Activated CD8-positive, alpha-beta T cell treated with anti-CD3 and anti-CD28 coated beads, Interleukin-2, amount 10 ng/mL, durations not matched to agents 7 days and 5 days (primary cell): ENCODE measurements at regions of chr1 and their contacts with region 1.

Region 1: DNA sequence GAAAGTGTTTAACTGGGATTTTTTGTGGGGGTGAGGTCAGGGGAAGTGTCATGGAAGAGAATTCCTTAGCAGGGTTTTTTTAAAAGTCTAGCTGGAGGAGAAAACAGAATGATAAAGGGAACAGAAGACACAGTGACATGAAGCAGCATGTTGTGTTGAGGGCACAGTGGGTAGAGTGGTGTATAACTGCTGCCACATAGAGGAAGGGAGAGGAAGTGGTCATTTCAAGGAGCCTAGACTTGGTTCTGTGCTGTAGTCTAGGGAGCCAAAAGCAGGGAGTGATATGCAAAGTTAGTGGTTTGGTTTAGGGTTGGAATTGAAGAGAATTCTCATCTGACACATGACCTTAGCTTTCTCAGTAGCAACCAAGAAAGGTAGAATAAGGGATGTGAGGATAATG is 10.2 kb downstream of the EEIG2 start:
- DNase-seq: peak; percentile 60
- ATAC-seq: peak; percentile 99
- H3K4me3 Mint-ChIP-seq: no peak overlapping the region
- H3K27ac Mint-ChIP-seq: no peak overlapping the region
- H3K4me1 Mint-ChIP-seq: peaks cover 4% of the 10 kb centered on the region
- H3K27me3 Mint-ChIP-seq: no peaks in the 10 kb centered on the region

Region 2: DNA sequence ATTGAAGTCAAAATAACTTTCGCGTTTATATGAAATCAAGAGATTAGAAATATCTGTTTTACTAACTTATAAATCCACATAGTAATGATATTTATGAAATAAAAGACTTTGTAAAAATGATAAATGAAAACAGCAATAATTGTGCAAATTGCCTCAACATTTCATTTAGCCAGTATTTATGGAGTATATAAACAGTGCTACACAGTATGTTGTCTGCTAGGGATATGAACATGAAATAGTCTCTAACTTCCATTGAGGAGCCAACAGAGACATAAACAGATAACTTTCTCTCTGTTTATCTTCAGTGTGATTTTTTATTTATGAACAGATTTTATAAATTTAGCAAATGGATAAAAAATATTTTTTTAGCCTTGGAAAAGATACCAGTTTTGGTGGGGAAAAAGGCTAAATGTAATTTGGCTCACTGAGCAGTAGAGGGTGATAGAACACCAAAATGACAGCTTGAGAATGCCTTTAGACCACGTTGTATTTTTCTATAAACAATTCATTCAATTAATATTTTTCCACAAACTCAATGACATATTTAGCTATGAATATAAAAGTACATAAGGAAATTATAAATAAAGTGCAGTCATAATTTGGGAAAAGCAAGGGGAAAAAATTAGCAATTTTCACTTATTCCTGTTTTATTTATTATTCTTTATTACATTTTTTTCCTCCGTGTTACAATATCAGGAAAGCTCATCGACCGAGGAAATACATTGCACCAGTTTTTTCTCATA is 57.7 kb before region 1 on chr1:
- CTCF ChIA-PET with region 1: interaction called, 10 read pairs
- POLR2A ChIA-PET with region 1: no interaction called
- DNase-seq: no peak
- ATAC-seq: no peak
- H3K4me3 Mint-ChIP-seq: no peak overlapping the region
- H3K27ac Mint-ChIP-seq: no peak overlapping the region
- H3K4me1 Mint-ChIP-seq: no peaks in the 10 kb centered on the region
- H3K27me3 Mint-ChIP-seq: peaks cover 57% of the 10 kb centered on the region

Region 3: GRCh38 chr1:108661030-108661620 is 91.0 kb after region 1 on chr1 and contains the start of gene HENMT1:
- CTCF ChIA-PET with region 1: no interaction called
- POLR2A ChIA-PET with region 1: no interaction called
- DNase-seq: peak; percentile 84
- ATAC-seq: peak; percentile 86
- H3K4me3 Mint-ChIP-seq: peak within 1 kb of the TSS; percentile 85
- H3K27ac Mint-ChIP-seq: peak within 1 kb of the TSS; percentile 97
- H3K4me1 Mint-ChIP-seq: peaks cover 51% of the 10 kb centered on the region
- H3K27me3 Mint-ChIP-seq: no peaks in the 10 kb centered on the region
- total RNA-seq, gene HENMT1: 38.7 to 40.5 TPM

Region 4: DNA sequence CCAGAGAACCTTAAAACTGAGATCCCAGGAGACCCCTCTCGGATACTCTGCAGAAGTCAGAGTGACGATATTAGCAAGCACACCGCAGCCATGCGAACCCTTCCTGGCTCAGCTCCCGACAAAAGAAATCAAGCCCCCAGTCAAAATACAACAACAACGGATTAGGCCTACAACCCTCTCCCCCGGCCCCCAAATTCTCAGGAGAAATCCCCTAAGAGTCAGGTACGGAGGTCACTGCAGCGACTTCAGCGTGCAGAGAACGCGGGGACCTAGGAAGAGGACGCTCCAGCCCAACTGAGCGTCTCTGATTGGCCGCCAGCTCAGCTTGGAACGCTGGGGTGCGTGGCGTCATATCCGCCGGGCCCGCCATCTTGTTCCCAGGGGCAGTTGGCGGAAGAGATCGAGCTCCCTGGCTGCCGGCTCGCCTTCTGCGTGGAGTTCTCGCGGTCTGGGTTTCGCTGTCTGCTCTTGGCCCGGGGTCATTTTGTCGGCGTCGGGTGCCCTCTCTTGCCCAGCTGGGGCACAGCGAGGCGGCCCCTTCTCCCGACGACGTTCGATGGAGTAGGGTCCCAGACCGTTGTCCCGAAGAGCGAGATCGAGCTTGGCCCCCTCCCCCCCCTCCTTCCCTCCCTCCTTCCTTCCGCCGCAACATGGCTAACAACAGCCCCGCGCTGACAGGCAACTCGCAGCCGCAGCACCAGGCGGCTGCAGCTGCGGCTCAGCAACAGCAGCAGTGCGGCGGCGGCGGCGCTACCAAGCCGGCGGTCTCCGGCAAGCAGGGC is 122.0 kb after region 1 on chr1 and contains the start of gene PRPF38B:
- CTCF ChIA-PET with region 1: no interaction called
- POLR2A ChIA-PET with region 1: no interaction called
- DNase-seq: peak; percentile 97
- ATAC-seq: peak; percentile 89
- H3K4me3 Mint-ChIP-seq: peak within 1 kb of the TSS; percentile 96
- H3K27ac Mint-ChIP-seq: peak within 1 kb of the TSS; percentile 99
- H3K4me1 Mint-ChIP-seq: peaks cover 42% of the 10 kb centered on the region
- H3K27me3 Mint-ChIP-seq: no peaks in the 10 kb centered on the region
- total RNA-seq, gene PRPF38B: 66.8 to 69.1 TPM